ENCODE measurements at regions of chr12 and their contacts with region 1.

Region 1: GRCh38 chr12:2884810-2885209 is 5.9 kb upstream of the TULP3 start:
- DNase-seq: no peak
- H3K4me3 ChIP-seq: no peak overlapping the region
- H3K27ac ChIP-seq: no peak overlapping the region
- H3K4me1 ChIP-seq: peaks cover 0 to 5% (median 0%) of the 10 kb centered on the region in 4 experiments; a peak in 4 of 7 replicates
- H3K27me3 ChIP-seq: no peaks in the 10 kb centered on the region
- CTCF ChIP-seq: no peak
- EP300 ChIP-seq: no peak
- POLR2A ChIP-seq: no peak
- RAD21 ChIP-seq: no peak

Region 2: DNA sequence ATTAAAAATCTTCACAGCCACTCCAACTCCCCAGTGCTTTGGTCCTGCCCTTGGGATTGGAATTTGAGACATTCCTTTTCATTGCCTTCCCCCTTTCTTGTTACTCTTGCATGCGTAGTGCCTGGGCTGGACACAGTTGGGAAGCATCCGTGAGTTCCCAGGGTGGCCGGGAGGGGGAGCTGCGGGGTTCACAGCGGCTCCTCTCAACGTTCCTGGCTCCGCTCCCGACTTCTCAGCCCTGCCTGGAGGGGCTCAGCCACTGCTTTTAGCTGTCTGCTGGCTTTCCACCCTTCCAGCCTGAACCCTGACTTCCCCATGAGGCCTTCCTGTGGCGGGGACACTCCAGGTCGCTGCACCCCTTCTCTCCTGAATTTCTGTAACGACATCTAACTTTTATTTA is 31.2 kb before region 1 on chr12:
- CTCF ChIA-PET with region 1: interaction called, 24 read pairs
- POLR2A ChIA-PET with region 1: interaction called, 31 read pairs
- DNase-seq: peak; percentile 82 to 98
- H3K4me3 ChIP-seq: no peak overlapping the region
- H3K27ac ChIP-seq: no peak overlapping the region
- H3K4me1 ChIP-seq: peaks cover 0 to 6% (median under 1%) of the 10 kb centered on the region in 4 experiments; a peak in 4 of 7 replicates
- H3K27me3 ChIP-seq: no peaks in the 10 kb centered on the region
- CTCF ChIP-seq: peak; percentile 91 to 97 (median 93)
- EP300 ChIP-seq: peak in 1 of 2 experiments; percentile 20; a peak in 1 of 3 replicates
- POLR2A ChIP-seq: no peak
- RAD21 ChIP-seq: peak; percentile 68 to 73

Measured in H1 (cell line).